Thyroid gland (tissue), 4 donors: ENCODE measurements at regions of chr12 and their contacts with region 1.

Region 1: GRCh38 chr12:26028953-26029735 is 70.7 kb downstream of the RASSF8 start:
- DNase-seq: peak; percentile 23 to 26
- H3K4me3 ChIP-seq: no peak overlapping the region
- H3K27ac ChIP-seq: no peak overlapping the region
- H3K4me1 ChIP-seq: peaks cover 0 to 3% of the 10 kb centered on the region in 2 donors
- H3K27me3 ChIP-seq: no peaks in the 10 kb centered on the region
- CTCF ChIP-seq: peak; percentile 57 to 88 (median 73)
- POLR2A ChIP-seq: no peak

Region 2: DNA sequence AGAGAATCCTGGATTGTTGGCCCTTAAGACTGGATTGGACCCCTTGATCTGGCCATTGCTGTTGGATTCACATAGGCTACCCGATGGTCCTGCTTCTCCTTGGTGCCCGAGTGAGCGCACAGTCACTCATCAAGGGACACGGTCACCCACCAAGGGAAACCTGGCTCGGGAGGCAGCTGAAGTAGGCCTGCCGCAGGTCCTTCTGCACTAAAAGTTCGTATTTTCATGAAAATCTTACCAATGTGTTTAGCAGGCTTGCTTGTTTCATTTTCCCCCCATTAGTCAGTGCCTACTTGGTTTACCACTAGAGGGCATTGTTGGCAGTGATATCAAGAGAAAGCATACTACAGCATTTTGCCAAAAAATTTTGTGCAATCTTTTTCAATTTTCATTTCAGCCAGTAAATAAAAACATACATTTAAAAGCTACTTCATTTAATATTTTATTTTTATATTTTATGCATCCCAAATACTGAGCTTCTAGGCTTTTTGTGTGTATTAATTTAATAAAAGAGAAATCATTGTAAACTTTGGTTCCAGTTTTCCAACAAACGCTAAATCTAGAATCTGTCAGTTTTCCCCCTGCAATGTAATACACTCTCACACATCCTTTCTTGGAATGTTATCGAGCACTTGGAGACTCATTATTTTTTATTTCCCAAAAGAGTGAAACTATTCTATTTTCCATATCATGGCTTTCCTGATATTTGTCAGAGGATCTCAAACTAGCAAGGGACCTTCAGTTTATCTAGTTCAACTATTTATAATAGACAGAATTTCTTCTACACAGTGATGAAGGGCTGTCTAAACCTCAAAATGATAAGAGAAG is 592.7 kb before region 1 on chr12:
- intact Hi-C with region 1: loop called (anchors 10 kb)
- DNase-seq: peak; percentile 18 to 28
- H3K4me3 ChIP-seq: no peak overlapping the region
- H3K27ac ChIP-seq: no peak overlapping the region
- H3K4me1 ChIP-seq: peaks cover 16% of the 10 kb centered on the region in 2 donors
- H3K27me3 ChIP-seq: no peaks in the 10 kb centered on the region
- CTCF ChIP-seq: peak; percentile 51 to 84 (median 74)
- POLR2A ChIP-seq: no peak

Region 3: GRCh38 chr12:25583545-25583944 is 445.6 kb before region 1 on chr12:
- intact Hi-C with region 1: loop called (anchors 10 kb)
- DNase-seq: peak; percentile 28 to 38
- H3K4me3 ChIP-seq: no peak overlapping the region
- H3K27ac ChIP-seq: no peak overlapping the region
- H3K4me1 ChIP-seq: no peaks in the 10 kb centered on the region
- H3K27me3 ChIP-seq: no peaks in the 10 kb centered on the region
- CTCF ChIP-seq: peak in 4 of 6 experiments; percentile 24 to 52 (median 40)
- POLR2A ChIP-seq: no peak

Region 4: GRCh38 chr12:25958428-25959070 is 70.6 kb before region 1 on chr12 and contains the start of gene RASSF8:
- intact Hi-C with region 1: loop called (anchors 5 kb)
- DNase-seq: peak; percentile 75 to 78
- H3K4me3 ChIP-seq: peak within 1 kb of the TSS; percentile 63 to 89 (median 76)
- H3K27ac ChIP-seq: peak within 1 kb of the TSS; percentile 86 to 98 (median 95)
- H3K4me1 ChIP-seq: peaks cover 0 to 8% of the 10 kb centered on the region in 2 donors
- H3K27me3 ChIP-seq: no peaks in the 10 kb centered on the region
- CTCF ChIP-seq: peak in 1 of 6 experiments; percentile 14
- POLR2A ChIP-seq: peak; percentile 90 to 92
- total RNA-seq, gene RASSF8: 20.1 to 69.1 (median 33.5) TPM